Breast epithelium (tissue), 4 donors: ENCODE measurements at regions of chr9 and their contacts with region 1.

Region 1: DNA sequence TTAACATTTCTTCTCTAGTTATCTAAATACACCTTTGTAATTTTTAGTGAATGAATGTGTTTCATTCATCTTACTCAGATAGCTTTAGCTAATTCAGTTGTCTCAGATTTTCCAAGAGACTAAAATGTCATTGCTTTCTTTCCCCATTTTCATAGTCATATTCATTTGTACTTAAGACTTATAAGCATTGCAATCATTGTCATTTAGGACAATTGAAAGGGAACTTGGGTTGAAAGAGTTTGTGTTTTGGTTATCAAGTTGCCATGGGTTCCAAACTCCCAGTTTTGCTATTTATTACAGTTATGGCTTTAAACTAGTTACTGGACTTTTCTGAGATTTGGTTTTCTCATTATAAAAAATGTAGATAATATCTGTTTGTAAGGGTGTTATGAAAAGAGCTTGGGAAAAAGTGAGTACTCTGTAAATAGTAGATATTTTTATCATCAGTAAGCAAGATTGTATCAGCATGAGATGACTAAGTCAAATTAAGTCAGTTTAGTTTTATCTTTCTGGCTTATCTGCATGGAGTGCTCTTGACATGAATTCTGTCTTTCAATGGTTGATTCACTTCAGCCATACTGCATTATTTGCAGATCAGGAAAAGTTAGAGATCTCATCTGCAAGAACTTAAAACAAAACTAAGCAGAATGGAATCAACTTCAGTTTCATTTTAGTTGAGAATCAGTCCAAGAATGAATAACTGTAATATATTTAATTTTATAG is 107.5 kb downstream of the PBX3 start:
- DNase-seq: no peak
- H3K4me3 ChIP-seq: no peak overlapping the region
- H3K27ac ChIP-seq: no peak overlapping the region
- H3K4me1 ChIP-seq: no peaks in the 10 kb centered on the region
- H3K27me3 ChIP-seq: no peaks in the 10 kb centered on the region
- CTCF ChIP-seq: no peak
- POLR2A ChIP-seq: no peak

Region 2: DNA sequence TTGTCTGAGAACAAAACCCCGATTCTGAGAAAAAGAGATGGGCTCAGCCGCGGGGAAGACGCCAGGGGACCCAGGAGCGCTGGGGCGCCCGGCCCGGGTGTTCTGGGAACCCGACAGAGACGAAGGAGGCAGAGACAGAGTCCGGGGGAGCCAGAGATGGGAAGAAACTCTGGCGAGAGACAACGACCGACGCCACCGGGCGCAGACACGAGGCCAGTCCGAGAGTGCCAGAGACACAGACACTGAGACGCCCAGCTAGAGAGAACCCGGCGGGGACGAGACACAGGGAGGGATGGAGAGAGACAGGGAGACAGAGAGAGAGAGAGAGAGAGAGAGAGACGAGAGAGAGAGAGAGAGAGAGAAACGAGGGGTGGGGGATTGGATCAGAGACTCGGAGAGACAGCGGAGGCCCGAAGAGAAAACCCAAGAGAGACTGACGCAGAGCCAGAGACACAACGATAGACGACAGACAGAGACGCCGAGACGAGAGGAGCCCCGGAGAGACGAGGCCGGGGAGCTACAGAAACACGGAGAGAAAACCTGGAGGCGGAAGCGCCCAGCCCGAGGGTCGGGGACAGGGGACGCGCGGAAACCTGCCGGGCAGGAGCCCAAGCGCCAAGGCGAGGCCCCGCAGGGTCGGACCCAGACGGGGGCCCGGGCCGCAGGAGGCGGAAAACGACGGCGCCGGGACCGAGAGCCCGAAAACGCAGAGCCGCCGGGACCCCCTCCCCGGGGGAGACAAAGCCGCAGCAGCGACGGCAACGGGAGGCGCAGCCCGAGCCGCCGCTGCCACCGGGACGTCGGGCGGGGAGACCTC is 1350.8 kb before region 1 on chr9:
- intact Hi-C with region 1: loop called (anchors 5 kb)
- DNase-seq: no peak
- H3K4me3 ChIP-seq: peak overlapping the region in 2 of 3 donors; percentile 33 to 56
- H3K27ac ChIP-seq: no peak overlapping the region
- H3K4me1 ChIP-seq: peaks cover 0 to 5% of the 10 kb centered on the region in 2 donors
- H3K27me3 ChIP-seq: peaks cover 6 to 52% of the 10 kb centered on the region in 2 donors
- CTCF ChIP-seq: no peak
- POLR2A ChIP-seq: no peak

Region 3: DNA sequence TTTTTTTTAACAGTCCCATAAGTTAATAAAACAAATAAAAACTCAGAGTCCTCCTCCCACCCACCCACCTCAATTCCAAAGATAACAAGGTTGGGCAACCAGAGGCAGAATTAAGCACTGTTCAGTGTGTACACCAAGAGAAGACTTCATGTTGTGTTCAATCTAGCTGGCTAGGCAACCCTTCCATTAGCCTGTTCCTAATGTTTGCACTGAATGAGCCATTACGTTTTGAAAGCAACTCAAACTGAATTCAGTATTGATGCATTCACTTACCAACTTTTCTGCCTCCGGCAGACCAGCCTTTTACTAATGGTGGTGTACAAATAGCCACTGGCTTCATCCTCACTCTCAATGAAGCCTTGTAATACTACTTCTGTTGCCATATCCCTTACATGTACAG is 60.0 kb before region 1 on chr9:
- intact Hi-C with region 1: loop called (anchors 5 kb)
- DNase-seq: no peak
- H3K4me3 ChIP-seq: no peak overlapping the region
- H3K27ac ChIP-seq: no peak overlapping the region
- H3K4me1 ChIP-seq: no peaks in the 10 kb centered on the region
- H3K27me3 ChIP-seq: no peaks in the 10 kb centered on the region
- CTCF ChIP-seq: no peak
- POLR2A ChIP-seq: no peak